ENCODE measurements at regions of chr5 and their contacts with region 1.

Region 1: GRCh38 chr5:176573564-176574296 is 24.6 kb downstream of the CDHR2 start:
- DNase-seq: peak; percentile 74
- H3K4me3 ChIP-seq: no peak overlapping the region
- H3K27ac ChIP-seq: no peak overlapping the region
- H3K4me1 ChIP-seq: peaks cover 4% of the 10 kb centered on the region
- CTCF ChIP-seq: peak; percentile 92

Region 2: DNA sequence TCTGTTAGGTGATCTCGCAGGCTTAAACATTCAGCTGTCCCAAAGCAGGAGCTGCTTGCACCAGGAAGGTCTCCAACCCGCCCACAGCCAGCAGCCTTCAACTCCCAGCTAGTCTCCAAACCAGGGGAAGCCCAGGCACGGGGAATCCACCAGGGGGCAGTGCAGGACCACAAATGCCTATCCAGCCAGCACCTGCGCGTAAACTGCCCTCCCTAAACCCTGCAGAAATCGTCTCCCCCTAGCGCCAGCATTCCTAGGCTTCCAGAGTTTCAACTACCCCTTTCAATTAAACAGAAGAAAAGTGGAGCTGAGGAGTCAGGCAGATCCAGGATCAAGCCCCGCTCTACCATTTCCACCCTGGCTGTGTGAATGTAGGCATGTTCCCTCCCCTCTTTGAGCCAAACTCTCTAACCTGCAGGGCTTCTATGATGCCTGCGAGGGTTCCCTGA is 843.9 kb before region 1 on chr5:
- CTCF ChIA-PET with region 1: no interaction called
- POLR2A ChIA-PET with region 1: no interaction called
- intact Hi-C with region 1: loop called (anchors 10 kb)
- DNase-seq: peak; percentile 78
- H3K4me3 ChIP-seq: no peak overlapping the region
- H3K27ac ChIP-seq: no peak overlapping the region
- H3K4me1 ChIP-seq: no peaks in the 10 kb centered on the region
- CTCF ChIP-seq: peak; percentile 96

Region 3: GRCh38 chr5:176415952-176416924 is 157.5 kb before region 1 on chr5 and contains the start of gene CLTB:
- CTCF ChIA-PET with region 1: no interaction called
- POLR2A ChIA-PET with region 1: no interaction called
- intact Hi-C with region 1: loop called (anchors 1 kb)
- DNase-seq: peak; percentile 93
- H3K4me3 ChIP-seq: peak within 1 kb of the TSS; percentile 86
- H3K27ac ChIP-seq: peak within 1 kb of the TSS; percentile 2
- H3K4me1 ChIP-seq: peaks cover 21% of the 10 kb centered on the region
- CTCF ChIP-seq: peak; percentile 71
- total RNA-seq, gene CLTB: 53.4 and 69.2 TPM in 2 replicates

Region 4: GRCh38 chr5:176559683-176560082 is 14.0 kb before region 1 on chr5:
- CTCF ChIA-PET with region 1: no interaction called
- POLR2A ChIA-PET with region 1: no interaction called
- intact Hi-C with region 1: no loop called
- DNase-seq: peak; percentile 62
- H3K4me3 ChIP-seq: no peak overlapping the region
- H3K27ac ChIP-seq: no peak overlapping the region
- H3K4me1 ChIP-seq: peaks cover 6% of the 10 kb centered on the region
- CTCF ChIP-seq: peak; percentile 65

Region 5: DNA sequence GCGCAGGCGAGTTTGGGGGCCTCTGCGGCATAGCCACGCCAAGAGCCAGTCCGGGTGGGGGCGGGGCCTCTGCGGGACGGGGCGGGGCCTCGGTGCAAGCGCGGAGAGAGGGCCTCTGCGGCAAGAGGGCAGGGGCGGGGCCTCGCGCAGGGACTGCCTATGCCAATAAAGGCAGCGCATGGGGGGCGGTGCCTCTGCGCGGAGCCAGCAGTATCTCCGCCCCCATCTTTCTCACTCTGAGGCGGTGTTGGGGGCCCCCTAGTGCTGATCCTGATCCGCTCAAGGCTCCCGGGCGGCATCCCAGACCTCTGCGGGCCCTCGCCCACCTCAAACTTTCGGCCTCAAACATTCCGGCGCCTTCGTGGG is 45.5 kb after region 1 on chr5:
- CTCF ChIA-PET with region 1: no interaction called
- POLR2A ChIA-PET with region 1: no interaction called
- intact Hi-C with region 1: loop called (anchors 1 kb)
- DNase-seq: peak; percentile 91
- H3K4me3 ChIP-seq: no peak overlapping the region
- H3K27ac ChIP-seq: no peak overlapping the region
- H3K4me1 ChIP-seq: no peaks in the 10 kb centered on the region
- CTCF ChIP-seq: peak; percentile 66

Region 6: GRCh38 chr5:176647030-176647866 is 73.5 kb after region 1 on chr5 and contains the start of gene TSPAN17:
- CTCF ChIA-PET with region 1: interaction called, 3 read pairs
- POLR2A ChIA-PET with region 1: no interaction called
- intact Hi-C with region 1: loop called (anchors 1 kb)
- DNase-seq: peak; percentile 100
- H3K4me3 ChIP-seq: peak within 1 kb of the TSS; percentile 86
- H3K27ac ChIP-seq: peak within 1 kb of the TSS; percentile 42
- H3K4me1 ChIP-seq: peaks cover 24% of the 10 kb centered on the region
- CTCF ChIP-seq: peak; percentile 62
- total RNA-seq, gene TSPAN17: 9.3 and 10.3 TPM in 2 replicates

Measured in OCI-LY7 (cell line).